ENCODE measurements at regions of chr20 and their contacts with region 1.

Region 1: GRCh38 chr20:51800060-51800794 is 2.1 kb downstream of the SALL4 start:
- DNase-seq: peak; percentile 62 to 84
- H3K4me3 ChIP-seq: peak overlapping the region; percentile 78
- H3K27ac ChIP-seq: peak overlapping the region; percentile 56
- H3K4me1 ChIP-seq: peaks cover 68% of the 10 kb centered on the region
- H3K27me3 ChIP-seq: no peaks in the 10 kb centered on the region
- CTCF ChIP-seq: peak; percentile 97

Region 2: GRCh38 chr20:51695574-51696303 is 104.5 kb before region 1 on chr20:
- CTCF ChIA-PET with region 1: no interaction called
- POLR2A ChIA-PET with region 1: no interaction called
- intact Hi-C with region 1: loop called (anchors 1 kb)
- DNase-seq: peak; percentile 29 to 53
- H3K4me3 ChIP-seq: no peak overlapping the region
- H3K27ac ChIP-seq: no peak overlapping the region; the same call in 1 of the 2 replicates
- H3K4me1 ChIP-seq: peaks cover 23% of the 10 kb centered on the region
- H3K27me3 ChIP-seq: no peaks in the 10 kb centered on the region
- CTCF ChIP-seq: no peak

Region 3: DNA sequence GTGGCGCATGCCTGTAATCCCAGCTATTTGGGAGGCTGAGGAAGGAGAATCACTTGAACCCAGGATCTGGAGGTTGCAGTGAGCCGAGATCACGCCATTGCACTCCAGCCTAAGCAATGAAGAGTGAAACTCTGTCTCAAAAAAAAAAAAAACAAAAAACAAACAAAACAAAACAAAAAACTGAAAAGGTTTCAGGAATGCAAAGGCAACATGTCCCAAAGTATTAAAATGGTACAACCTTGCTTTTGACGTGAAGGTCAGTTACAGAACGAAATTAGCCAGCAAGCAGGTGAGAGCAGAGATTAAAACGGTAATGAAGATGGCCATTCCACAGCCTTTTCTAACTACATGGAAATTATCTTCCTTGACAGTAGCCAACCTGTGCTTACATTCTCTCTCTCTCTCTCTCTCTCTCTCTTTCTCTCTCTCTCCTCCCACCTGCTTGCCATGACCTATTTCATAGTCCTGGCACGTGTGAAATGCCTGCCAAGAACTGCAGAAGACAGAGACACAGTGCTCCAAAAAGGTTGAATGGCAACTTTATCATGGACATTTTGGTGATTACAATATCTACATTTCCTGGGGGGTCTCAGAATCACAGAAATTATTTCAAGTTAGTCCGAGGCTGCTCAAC is 40.5 kb after region 1 on chr20:
- CTCF ChIA-PET with region 1: interaction called, 13 read pairs
- POLR2A ChIA-PET with region 1: no interaction called
- intact Hi-C with region 1: no loop called
- DNase-seq: no peak
- H3K4me3 ChIP-seq: no peak overlapping the region
- H3K27ac ChIP-seq: no peak overlapping the region
- H3K4me1 ChIP-seq: no peaks in the 10 kb centered on the region
- H3K27me3 ChIP-seq: no peaks in the 10 kb centered on the region
- CTCF ChIP-seq: no peak

Region 4: GRCh38 chr20:51966291-51966971 is 166.2 kb after region 1 on chr20:
- CTCF ChIA-PET with region 1: interaction called, 3 read pairs
- POLR2A ChIA-PET with region 1: no interaction called
- intact Hi-C with region 1: loop called (anchors 2 kb)
- DNase-seq: peak; percentile 67 to 74
- H3K4me3 ChIP-seq: no peak overlapping the region
- H3K27ac ChIP-seq: no peak overlapping the region
- H3K4me1 ChIP-seq: peaks cover 5% of the 10 kb centered on the region; the same call in 1 of the 2 replicates
- H3K27me3 ChIP-seq: no peaks in the 10 kb centered on the region
- CTCF ChIP-seq: peak; percentile 86

Region 5: GRCh38 chr20:51995551-51995951 is 195.3 kb after region 1 on chr20:
- CTCF ChIA-PET with region 1: no interaction called
- POLR2A ChIA-PET with region 1: no interaction called
- intact Hi-C with region 1: loop called (anchors 5 kb)
- DNase-seq: no peak
- H3K4me3 ChIP-seq: no peak overlapping the region
- H3K27ac ChIP-seq: no peak overlapping the region
- H3K4me1 ChIP-seq: no peaks in the 10 kb centered on the region
- H3K27me3 ChIP-seq: no peaks in the 10 kb centered on the region
- CTCF ChIP-seq: no peak

Region 6: DNA sequence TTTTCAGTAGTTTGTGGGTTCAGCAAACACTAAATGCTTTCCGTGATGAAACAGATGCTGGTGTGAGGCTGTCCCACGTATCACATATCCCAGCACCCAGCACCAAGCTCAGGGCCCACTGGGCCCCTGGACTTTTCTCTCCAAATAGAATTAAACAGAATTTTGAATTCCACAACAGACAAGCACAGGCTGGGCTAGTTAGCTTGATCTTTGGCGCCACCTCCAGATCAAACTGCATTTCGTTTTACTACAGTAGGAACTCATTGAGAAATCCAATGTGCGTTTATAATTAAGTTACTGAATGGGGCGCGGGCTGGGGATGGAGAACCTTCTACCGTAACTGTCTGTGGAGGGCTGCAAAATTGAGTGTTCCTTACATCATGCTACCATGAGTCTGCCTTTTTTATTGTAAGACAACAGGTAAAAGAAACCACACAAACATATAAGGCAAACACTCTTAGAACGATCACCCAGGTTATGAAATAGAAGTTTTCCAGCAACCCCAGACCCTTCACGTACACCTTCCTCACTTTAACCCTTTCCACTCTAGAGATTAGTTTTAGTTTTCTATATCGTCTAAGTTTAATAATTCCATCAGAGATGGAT is 283.5 kb after region 1 on chr20:
- CTCF ChIA-PET with region 1: interaction called, 3 read pairs
- POLR2A ChIA-PET with region 1: interaction called, 3 read pairs
- intact Hi-C with region 1: loop called (anchors 2 kb)
- DNase-seq: peak; percentile 34 to 48
- H3K4me3 ChIP-seq: no peak overlapping the region
- H3K27ac ChIP-seq: peak overlapping the region; percentile 33; the same call in 1 of the 2 replicates
- H3K4me1 ChIP-seq: peaks cover 13% of the 10 kb centered on the region
- H3K27me3 ChIP-seq: no peaks in the 10 kb centered on the region
- CTCF ChIP-seq: peak; percentile 82

Region 7: DNA sequence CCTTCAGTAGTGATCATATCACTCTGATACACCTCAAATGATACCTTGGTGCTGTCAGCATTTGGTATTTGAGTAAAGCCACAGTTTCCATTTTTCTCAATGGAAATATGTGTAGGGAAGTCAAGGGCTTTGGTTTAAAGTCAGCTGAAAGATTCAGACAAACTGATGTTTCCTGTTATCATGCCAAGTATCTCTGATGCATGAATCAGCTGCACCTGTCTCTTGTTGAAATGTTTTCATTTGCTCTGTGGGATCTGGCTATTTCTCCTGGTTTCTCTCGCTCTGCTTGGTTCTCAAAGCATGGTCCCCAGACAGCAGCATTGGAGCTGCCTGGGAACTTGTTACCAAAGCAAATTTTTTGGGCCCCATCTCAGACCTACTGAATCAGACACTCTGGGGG is 367.9 kb after region 1 on chr20:
- CTCF ChIA-PET with region 1: no interaction called
- POLR2A ChIA-PET with region 1: no interaction called
- intact Hi-C with region 1: no loop called
- DNase-seq: no peak
- H3K4me3 ChIP-seq: no peak overlapping the region
- H3K27ac ChIP-seq: no peak overlapping the region
- H3K4me1 ChIP-seq: no peaks in the 10 kb centered on the region
- H3K27me3 ChIP-seq: no peaks in the 10 kb centered on the region
- CTCF ChIP-seq: no peak